ENCODE measurements at regions of chr1 and their contacts with region 1.

Region 1: DNA sequence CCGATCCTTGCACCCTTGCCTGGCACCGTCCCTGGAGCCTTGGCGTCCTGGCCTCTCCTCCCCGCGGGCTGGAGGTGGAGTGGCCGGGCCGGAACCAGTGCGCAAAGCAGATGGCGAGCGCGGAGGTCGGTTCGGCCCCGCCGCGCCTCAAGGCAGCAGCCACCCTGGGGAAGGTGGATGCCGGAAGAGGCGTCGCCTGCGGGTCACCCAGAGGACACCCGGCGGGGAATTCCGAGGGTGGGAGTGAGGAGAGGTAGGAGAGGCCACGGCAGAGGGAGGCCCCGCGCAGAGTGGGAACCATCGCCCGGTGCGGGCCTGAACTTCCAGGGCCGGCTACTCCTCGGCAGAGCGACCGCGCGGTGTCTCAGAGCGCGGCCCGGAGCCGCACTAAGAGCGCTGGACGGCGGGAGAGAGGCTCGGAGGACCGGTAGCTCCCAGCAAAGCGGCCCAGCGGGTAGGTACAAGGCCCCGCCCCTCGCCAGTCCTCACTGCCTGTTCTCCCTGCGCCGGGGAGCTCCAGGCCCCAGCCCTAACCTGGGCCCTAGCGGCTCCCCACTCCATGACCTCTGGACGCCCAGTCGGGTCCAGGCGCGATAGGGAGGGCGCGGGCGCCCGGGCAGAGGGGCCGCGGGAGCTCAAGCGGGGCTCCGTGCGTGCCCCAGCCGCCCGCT is at the start of gene RNF207:
- DNase-seq: peak; percentile 83 to 85 (median 84)
- ATAC-seq: peak; percentile 68
- H3K4me3 ChIP-seq: peak within 1 kb of the TSS; percentile 62
- H3K27ac ChIP-seq: peak within 1 kb of the TSS; percentile 87
- H3K4me1 ChIP-seq: peaks cover 14 to 77% of the 10 kb centered on the region in 2 experiments; a peak in 4 of 5 replicates
- H3K27me3 ChIP-seq: no peaks in the 10 kb centered on the region
- CTCF ChIP-seq: no peak
- EP300 ChIP-seq: no peak
- POLR2A ChIP-seq: peak; percentile 81
- RAD21 ChIP-seq: no peak
- polyA plus RNA-seq, gene RNF207: 2.7 to 4.3 TPM

Region 2: GRCh38 chr1:5992026-5992813 is 213.8 kb before region 1 on chr1 and contains the start of gene NPHP4:
- CTCF ChIA-PET with region 1: no interaction called
- POLR2A ChIA-PET with region 1: no interaction called
- in situ Hi-C with region 1: no loop called
- intact Hi-C with region 1: loop called (anchors 2 kb)
- DNase-seq: peak; percentile 99 to 100 (median 100)
- ATAC-seq: peak; percentile 95
- H3K4me3 ChIP-seq: peak within 1 kb of the TSS; percentile 83
- H3K27ac ChIP-seq: peak within 1 kb of the TSS; percentile 86
- H3K4me1 ChIP-seq: peaks cover 18 to 60% of the 10 kb centered on the region in 2 experiments; a peak in 4 of 5 replicates
- H3K27me3 ChIP-seq: no peaks in the 10 kb centered on the region
- CTCF ChIP-seq: peak in 1 of 3 experiments; percentile 24; a peak in 2 of 6 replicates
- EP300 ChIP-seq: no peak
- POLR2A ChIP-seq: peak; percentile 78
- RAD21 ChIP-seq: no peak
- polyA plus RNA-seq, gene NPHP4: 0.52 to 0.77 TPM

Region 3: GRCh38 chr1:6448749-6449631 is 243.0 kb after region 1 on chr1:
- CTCF ChIA-PET with region 1: no interaction called
- POLR2A ChIA-PET with region 1: no interaction called
- in situ Hi-C with region 1: no loop called
- intact Hi-C with region 1: no loop called
- DNase-seq: peak in 3 of 4 experiments; percentile 57 to 75 (median 71)
- ATAC-seq: peak; percentile 30
- H3K4me3 ChIP-seq: no peak overlapping the region
- H3K27ac ChIP-seq: no peak overlapping the region
- H3K4me1 ChIP-seq: peaks cover 0 to 51% of the 10 kb centered on the region in 2 experiments; a peak in 2 of 5 replicates
- H3K27me3 ChIP-seq: peaks cover 65 to 87% of the 10 kb centered on the region in 2 experiments
- CTCF ChIP-seq: peak in 1 of 3 experiments; percentile 44; a peak in 3 of 6 replicates
- EP300 ChIP-seq: no peak
- POLR2A ChIP-seq: no peak
- RAD21 ChIP-seq: no peak